Activated naive CD4-positive, alpha-beta T cell treated with anti-CD3 and anti-CD28 coated beads for 36 hours (primary cell): ENCODE measurements at regions of chr20 and their contacts with region 1.

Region 1: DNA sequence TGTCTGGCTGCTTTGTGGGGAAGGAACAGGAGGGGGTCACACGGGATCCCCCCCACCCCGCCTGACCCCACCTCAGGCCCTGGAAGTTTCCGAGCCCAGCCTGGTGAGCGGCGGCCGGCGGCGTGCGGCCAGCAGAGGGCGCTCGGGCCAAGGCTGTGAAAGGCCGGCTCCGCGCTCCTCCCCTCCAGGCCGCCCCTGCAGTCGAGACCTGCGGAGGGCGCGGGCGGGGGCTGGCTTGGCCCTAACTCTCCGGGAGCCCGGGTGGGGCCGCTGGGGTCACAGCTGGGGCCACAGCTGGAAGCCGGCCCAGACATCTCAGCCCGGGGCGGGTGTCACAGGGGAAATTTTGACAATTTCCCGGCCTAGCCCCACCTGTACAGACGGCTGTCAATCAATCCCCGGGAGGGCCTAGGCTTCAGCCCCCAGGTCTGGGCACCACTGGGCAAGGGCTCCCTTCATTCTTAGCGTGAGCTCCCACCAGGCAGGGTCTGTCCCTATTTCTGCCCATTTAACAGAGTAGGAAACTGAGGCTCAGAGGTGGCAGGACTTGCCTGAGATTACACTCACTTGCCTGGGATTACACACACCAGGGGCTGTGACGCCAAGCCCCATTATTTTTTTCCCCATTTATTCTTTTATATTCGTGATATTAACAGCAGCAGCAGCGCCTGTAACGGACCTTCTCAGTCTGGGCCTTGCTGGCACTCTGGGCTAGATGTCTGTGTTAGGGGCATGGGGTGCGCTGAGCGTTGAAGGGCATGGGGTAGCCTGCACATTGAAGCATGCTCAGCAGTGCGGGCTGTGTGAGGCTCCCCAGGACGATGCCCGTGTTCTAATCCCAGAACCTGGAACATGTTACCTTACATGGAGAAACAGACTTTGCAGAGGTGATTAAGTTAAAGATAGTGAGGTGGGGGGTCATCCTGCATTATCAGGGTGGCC is 23.0 kb downstream of the ZBP1 start:
- DNase-seq: peak; percentile 69
- H3K4me3 Mint-ChIP-seq: no peak overlapping the region
- H3K27ac Mint-ChIP-seq: no peak overlapping the region
- H3K4me1 Mint-ChIP-seq: peaks cover 1% of the 10 kb centered on the region
- H3K27me3 Mint-ChIP-seq: no peaks in the 10 kb centered on the region

Region 2: GRCh38 chr20:57383447-57384347 is 213.6 kb before region 1 on chr20:
- CTCF ChIA-PET with region 1: no interaction called
- intact Hi-C with region 1: loop called (anchors 2 kb)
- DNase-seq: no peak
- H3K4me3 Mint-ChIP-seq: no peak overlapping the region
- H3K27ac Mint-ChIP-seq: no peak overlapping the region
- H3K4me1 Mint-ChIP-seq: peaks cover 16% of the 10 kb centered on the region
- H3K27me3 Mint-ChIP-seq: no peaks in the 10 kb centered on the region

Region 3: GRCh38 chr20:57514273-57514751 is 83.0 kb before region 1 on chr20:
- CTCF ChIA-PET with region 1: interaction called, 7 read pairs
- intact Hi-C with region 1: loop called (anchors 1 kb)
- DNase-seq: peak; percentile 58
- H3K4me3 Mint-ChIP-seq: no peak overlapping the region
- H3K27ac Mint-ChIP-seq: no peak overlapping the region
- H3K4me1 Mint-ChIP-seq: no peaks in the 10 kb centered on the region
- H3K27me3 Mint-ChIP-seq: peaks cover 13% of the 10 kb centered on the region

Region 4: DNA sequence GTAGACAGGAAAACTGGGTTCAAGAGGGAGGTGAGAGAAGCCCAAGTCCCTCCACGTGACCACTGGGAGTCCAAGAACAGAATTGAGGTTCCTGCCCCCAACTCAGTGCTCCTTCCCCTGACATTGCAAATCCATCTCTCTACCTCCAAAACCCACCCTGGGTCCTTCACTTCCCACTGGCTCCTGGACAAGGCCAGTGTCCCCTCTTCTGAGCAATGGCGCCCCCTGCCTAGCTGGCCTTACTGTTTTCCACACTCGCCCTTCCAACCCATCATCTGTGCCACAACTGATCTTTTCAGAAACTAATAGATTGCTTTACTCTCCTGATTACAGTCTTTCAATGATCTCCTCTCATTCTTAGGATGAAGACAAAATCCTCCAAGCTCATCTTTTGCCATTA is 430.9 kb after region 1 on chr20:
- CTCF ChIA-PET with region 1: no interaction called
- intact Hi-C with region 1: loop called (anchors 1 kb)
- DNase-seq: peak; percentile 43
- H3K4me3 Mint-ChIP-seq: no peak overlapping the region
- H3K27ac Mint-ChIP-seq: no peak overlapping the region
- H3K4me1 Mint-ChIP-seq: peaks cover 2% of the 10 kb centered on the region
- H3K27me3 Mint-ChIP-seq: peaks cover 14% of the 10 kb centered on the region

Region 5: DNA sequence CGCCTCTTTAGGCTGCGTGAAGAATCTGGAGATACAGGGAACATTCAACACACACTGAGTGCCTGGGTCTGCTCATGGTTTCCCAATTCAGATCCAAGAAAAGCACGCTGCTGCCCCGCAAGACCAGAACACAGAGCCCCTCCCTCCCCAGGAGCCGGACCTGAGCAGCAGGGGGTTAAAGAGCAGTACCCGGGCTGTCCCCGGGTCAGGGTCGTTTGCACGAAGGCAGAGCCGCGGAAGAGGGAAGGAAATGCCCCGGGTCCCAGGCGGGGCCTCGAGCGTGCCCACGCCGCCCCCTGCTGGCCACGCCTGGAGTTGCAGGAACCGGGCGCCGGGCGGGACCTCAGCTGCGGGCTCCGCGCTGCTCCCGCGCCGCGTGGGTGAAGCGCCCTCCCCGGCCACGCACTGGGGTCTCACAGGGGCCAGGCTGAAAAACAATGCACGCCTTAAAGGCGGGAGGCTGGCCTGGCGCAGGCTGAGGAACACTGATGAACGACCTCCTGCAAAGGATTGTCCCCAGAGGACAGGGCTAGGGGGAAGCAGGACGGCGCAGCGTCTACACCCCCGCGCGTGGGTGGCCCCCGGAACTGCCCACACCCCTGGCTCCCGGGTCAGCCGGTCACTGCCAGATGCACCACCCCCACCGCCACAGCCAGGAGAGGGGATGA is 582.3 kb after region 1 on chr20:
- CTCF ChIA-PET with region 1: interaction called, 6 read pairs
- intact Hi-C with region 1: loop called (anchors 1 kb)
- DNase-seq: peak; percentile 64
- H3K4me3 Mint-ChIP-seq: peak overlapping the region; percentile 42
- H3K27ac Mint-ChIP-seq: no peak overlapping the region
- H3K4me1 Mint-ChIP-seq: peaks cover 9% of the 10 kb centered on the region
- H3K27me3 Mint-ChIP-seq: peaks cover 12% of the 10 kb centered on the region